ENCODE measurements at regions of chr3 and their contacts with region 1.

Region 1: DNA sequence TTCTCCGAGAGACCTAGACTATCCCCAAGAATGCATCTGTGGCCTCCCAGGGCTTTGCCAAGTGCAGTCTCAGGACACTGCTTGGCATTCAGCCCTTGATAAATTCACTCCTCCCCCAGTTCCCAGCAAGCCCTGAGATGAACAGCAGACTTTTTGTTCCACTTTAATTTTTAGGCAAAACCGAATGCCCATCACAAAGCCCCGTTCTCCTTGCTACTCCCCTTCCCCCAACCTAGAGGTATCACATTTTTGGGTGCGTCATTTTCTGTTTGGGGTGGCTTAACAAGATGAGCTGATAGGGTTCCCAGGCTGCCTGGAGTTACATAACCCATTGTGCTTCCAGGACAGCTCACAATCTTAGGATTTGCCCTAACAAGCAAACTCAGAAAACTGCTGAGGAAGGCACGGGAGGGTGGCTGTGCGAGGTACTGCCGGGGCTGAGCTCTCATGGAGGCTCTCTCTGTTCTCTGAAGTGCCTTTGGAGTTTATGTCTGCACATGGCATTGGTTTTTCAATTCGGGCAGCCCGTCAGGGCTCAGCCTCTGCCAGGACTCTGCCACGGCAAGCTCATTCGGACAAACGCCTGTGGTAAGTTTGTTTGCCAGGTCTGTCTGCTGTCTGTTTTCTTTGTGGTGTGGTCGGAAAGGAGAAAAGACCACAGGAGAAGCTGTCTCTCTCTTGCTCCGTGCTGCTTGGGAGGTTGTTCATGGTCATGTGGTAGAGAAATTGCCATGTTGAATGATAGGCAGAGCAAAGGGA is at the start of gene TRAK1:
- DNase-seq: peak in 1 of 2 donors; percentile 42
- H3K4me3 ChIP-seq: no peak within 1 kb of the TSS
- H3K27ac ChIP-seq: peak within 1 kb of the TSS in 1 of 2 donors; percentile 22
- H3K4me1 ChIP-seq: no peaks in the 10 kb centered on the region
- H3K27me3 ChIP-seq: no peaks in the 10 kb centered on the region
- CTCF ChIP-seq: no peak
- POLR2A ChIP-seq: no peak
- total RNA-seq, gene TRAK1: 14.3 to 37.5 (median 21.4) TPM

Region 2: DNA sequence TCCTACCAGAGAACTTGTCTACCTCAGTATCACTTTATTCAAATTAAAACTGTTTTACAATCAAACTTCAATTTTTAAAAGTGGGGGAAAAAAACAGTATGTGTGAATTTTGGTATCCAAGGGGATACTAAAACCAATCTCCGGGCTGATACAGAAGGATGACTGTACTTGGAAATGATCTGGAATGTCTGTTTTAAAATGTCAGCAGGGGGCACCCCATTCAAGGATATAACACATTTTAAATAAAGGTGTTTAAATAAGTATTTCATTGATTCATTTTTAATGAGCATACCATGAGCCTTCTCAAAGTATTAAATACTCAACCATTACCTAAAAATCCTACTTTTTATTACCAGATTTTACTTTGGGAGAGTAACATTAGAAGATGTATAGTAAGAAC is 197.2 kb before region 1 on chr3:
- intact Hi-C with region 1: loop called (anchors 10 kb)
- DNase-seq: peak in 1 of 2 donors; percentile 37
- H3K4me3 ChIP-seq: no peak overlapping the region
- H3K27ac ChIP-seq: no peak overlapping the region
- H3K4me1 ChIP-seq: no peaks in the 10 kb centered on the region
- H3K27me3 ChIP-seq: no peaks in the 10 kb centered on the region
- CTCF ChIP-seq: peak; percentile 52 to 67 (median 56)
- POLR2A ChIP-seq: no peak

Region 3: GRCh38 chr3:42228806-42229205 is 137.7 kb after region 1 on chr3:
- intact Hi-C with region 1: no loop called
- DNase-seq: no peak
- H3K4me3 ChIP-seq: no peak overlapping the region
- H3K27ac ChIP-seq: no peak overlapping the region
- H3K4me1 ChIP-seq: no peaks in the 10 kb centered on the region
- H3K27me3 ChIP-seq: no peaks in the 10 kb centered on the region
- CTCF ChIP-seq: no peak
- POLR2A ChIP-seq: no peak

Region 4: GRCh38 chr3:42552830-42553229 is 461.7 kb after region 1 on chr3:
- intact Hi-C with region 1: loop called (anchors 5 kb)
- DNase-seq: no peak
- H3K4me3 ChIP-seq: no peak overlapping the region
- H3K27ac ChIP-seq: no peak overlapping the region
- H3K4me1 ChIP-seq: no peaks in the 10 kb centered on the region
- H3K27me3 ChIP-seq: no peaks in the 10 kb centered on the region
- CTCF ChIP-seq: no peak
- POLR2A ChIP-seq: no peak

Measured in uterus (tissue), 4 donors.